Mammary epithelial cell (primary cell): ENCODE measurements at regions of chr3 and their contacts with region 1.

Region 1: DNA sequence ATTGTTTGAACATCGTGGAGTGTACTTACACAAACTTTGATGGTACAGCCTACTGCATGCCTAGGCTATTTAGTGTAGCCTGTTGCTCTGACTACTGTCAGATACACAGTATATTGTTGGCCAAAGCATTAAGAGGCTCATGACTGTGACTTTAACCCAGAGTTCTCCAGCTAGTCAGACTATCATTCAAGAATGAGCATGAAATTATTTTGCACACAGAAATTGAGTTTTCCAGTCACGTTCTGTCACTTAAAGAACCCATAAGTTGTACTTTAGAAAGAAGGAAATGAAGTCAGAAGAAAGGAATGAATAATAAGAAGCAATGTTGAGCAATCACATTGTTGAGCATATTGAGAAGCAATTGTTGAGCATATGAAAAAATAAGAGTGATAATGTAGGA is 37.6 kb upstream of the SLC22A13 start:
- DNase-seq: peak; percentile 47
- H3K4me3 ChIP-seq: no peak overlapping the region
- H3K27ac ChIP-seq: peak overlapping the region; percentile 40
- H3K4me1 ChIP-seq: peaks cover 24% of the 10 kb centered on the region
- H3K27me3 ChIP-seq: no peaks in the 10 kb centered on the region
- CTCF ChIP-seq: no peak

Region 2: GRCh38 chr3:38164966-38165680 is 62.9 kb before region 1 on chr3 and contains the start of gene OXSR1:
- CTCF ChIA-PET with region 1: no interaction called
- dilution Hi-C with region 1: no loop called
- in situ Hi-C with region 1: no loop called
- intact Hi-C with region 1: loop called (anchors 5 kb)
- DNase-seq: peak; percentile 100
- H3K4me3 ChIP-seq: peak within 1 kb of the TSS; percentile 70 to 96 (median 83)
- H3K27ac ChIP-seq: peak within 1 kb of the TSS; percentile 99
- H3K4me1 ChIP-seq: peaks cover 31% of the 10 kb centered on the region
- H3K27me3 ChIP-seq: no peaks in the 10 kb centered on the region
- CTCF ChIP-seq: no peak
- total RNA-seq, gene OXSR1: 48.3 to 70.6 TPM

Region 3: GRCh38 chr3:38247366-38248035 is 19.5 kb after region 1 on chr3:
- CTCF ChIA-PET with region 1: no interaction called
- dilution Hi-C with region 1: no loop called
- in situ Hi-C with region 1: no loop called
- intact Hi-C with region 1: loop called (anchors 1 kb)
- DNase-seq: peak; percentile 91
- H3K4me3 ChIP-seq: no peak overlapping the region
- H3K27ac ChIP-seq: peak overlapping the region; percentile 53
- H3K4me1 ChIP-seq: peaks cover 12% of the 10 kb centered on the region
- H3K27me3 ChIP-seq: no peaks in the 10 kb centered on the region
- CTCF ChIP-seq: peak; percentile 31 to 55